Naive thymus-derived CD4-positive, alpha-beta T cell (primary cell): ENCODE measurements at regions of chr6 and their contacts with region 1.

Region 1: GRCh38 chr6:14452567-14453527 is 335.3 kb downstream of the CD83 start:
- DNase-seq: peak in 8 of 9 donors; percentile 22 to 66 (median 50)
- ATAC-seq: peak; percentile 77
- H3K4me3 ChIP-seq: peak overlapping the region; percentile 35
- H3K4me3 Mint-ChIP-seq: peak overlapping the region; percentile 56 to 81 (median 72)
- H3K27ac ChIP-seq: no peak overlapping the region
- H3K27ac Mint-ChIP-seq: peak overlapping the region; percentile 33 to 82 (median 68)
- H3K4me1 ChIP-seq: peaks cover 23 to 41% of the 10 kb centered on the region in 2 donors
- H3K4me1 Mint-ChIP-seq: peaks cover 45 to 73% (median 64%) of the 10 kb centered on the region in 7 donors
- H3K27me3 ChIP-seq: no peaks in the 10 kb centered on the region
- H3K27me3 Mint-ChIP-seq: no peaks in the 10 kb centered on the region

Region 2: GRCh38 chr6:14406614-14407331 is 46.1 kb before region 1 on chr6:
- CTCF ChIA-PET with region 1: no interaction called
- POLR2A ChIA-PET with region 1: no interaction called
- intact Hi-C with region 1: no loop called
- DNase-seq: no peak
- ATAC-seq: no peak
- H3K4me3 ChIP-seq: no peak overlapping the region
- H3K4me3 Mint-ChIP-seq: no peak overlapping the region
- H3K27ac ChIP-seq: no peak overlapping the region
- H3K27ac Mint-ChIP-seq: peak overlapping the region in 1 of 9 donors; percentile 8
- H3K4me1 ChIP-seq: no peaks in the 10 kb centered on the region
- H3K4me1 Mint-ChIP-seq: peaks cover 0 to 2% (median 0%) of the 10 kb centered on the region in 7 donors
- H3K27me3 ChIP-seq: no peaks in the 10 kb centered on the region
- H3K27me3 Mint-ChIP-seq: no peaks in the 10 kb centered on the region

Region 3: GRCh38 chr6:14638906-14639761 is 186.3 kb after region 1 on chr6:
- CTCF ChIA-PET with region 1: no interaction called
- POLR2A ChIA-PET with region 1: no interaction called
- intact Hi-C with region 1: loop called in 1 of 2 experiments (anchors 5 kb)
- DNase-seq: no peak
- ATAC-seq: peak; percentile 54
- H3K4me3 ChIP-seq: no peak overlapping the region
- H3K4me3 Mint-ChIP-seq: peak overlapping the region in 1 of 10 donors; percentile 14
- H3K27ac ChIP-seq: no peak overlapping the region
- H3K27ac Mint-ChIP-seq: peak overlapping the region in 2 of 9 donors; percentile 25 to 46
- H3K4me1 ChIP-seq: peaks cover 27 to 29% of the 10 kb centered on the region in 2 donors
- H3K4me1 Mint-ChIP-seq: peaks cover 41 to 63% (median 52%) of the 10 kb centered on the region in 7 donors
- H3K27me3 ChIP-seq: no peaks in the 10 kb centered on the region
- H3K27me3 Mint-ChIP-seq: peaks cover 0 to 25% (median 4%) of the 10 kb centered on the region in 5 donors

Region 4: GRCh38 chr6:14711056-14711703 is 258.3 kb after region 1 on chr6:
- CTCF ChIA-PET with region 1: no interaction called
- POLR2A ChIA-PET with region 1: no interaction called
- intact Hi-C with region 1: loop called in 1 of 2 experiments (anchors 5 kb)
- DNase-seq: peak in 6 of 9 donors; percentile 18 to 59 (median 26)
- ATAC-seq: peak; percentile 91
- H3K4me3 ChIP-seq: no peak overlapping the region
- H3K4me3 Mint-ChIP-seq: peak overlapping the region in 1 of 10 donors; percentile 27
- H3K27ac ChIP-seq: no peak overlapping the region
- H3K27ac Mint-ChIP-seq: peak overlapping the region in 2 of 9 donors; percentile 7 to 78
- H3K4me1 ChIP-seq: no peaks in the 10 kb centered on the region
- H3K4me1 Mint-ChIP-seq: peaks cover 5 to 24% (median 6%) of the 10 kb centered on the region in 7 donors
- H3K27me3 ChIP-seq: no peaks in the 10 kb centered on the region
- H3K27me3 Mint-ChIP-seq: peaks cover 0 to 4% (median 0%) of the 10 kb centered on the region in 5 donors